CD4-positive, alpha-beta T cell (primary cell): ENCODE measurements at regions of chr4 and their contacts with region 1.

Region 1: GRCh38 chr4:108030332-108030731 is 40.6 kb downstream of the HADH start:
- DNase-seq: peak; percentile 52 to 88 (median 70)
- ATAC-seq: peak; percentile 87
- H3K4me3 ChIP-seq: no peak overlapping the region
- H3K4me3 Mint-ChIP-seq: peak overlapping the region; percentile 64
- H3K27ac ChIP-seq: peak overlapping the region in 1 of 2 donors; percentile 42
- H3K27ac Mint-ChIP-seq: peak overlapping the region; percentile 81
- H3K4me1 ChIP-seq: peaks cover 37% of the 10 kb centered on the region
- H3K4me1 Mint-ChIP-seq: peaks cover 67% of the 10 kb centered on the region
- H3K27me3 ChIP-seq: no peaks in the 10 kb centered on the region
- H3K27me3 Mint-ChIP-seq: no peaks in the 10 kb centered on the region
- CTCF ChIP-seq: peak; percentile 69

Region 2: DNA sequence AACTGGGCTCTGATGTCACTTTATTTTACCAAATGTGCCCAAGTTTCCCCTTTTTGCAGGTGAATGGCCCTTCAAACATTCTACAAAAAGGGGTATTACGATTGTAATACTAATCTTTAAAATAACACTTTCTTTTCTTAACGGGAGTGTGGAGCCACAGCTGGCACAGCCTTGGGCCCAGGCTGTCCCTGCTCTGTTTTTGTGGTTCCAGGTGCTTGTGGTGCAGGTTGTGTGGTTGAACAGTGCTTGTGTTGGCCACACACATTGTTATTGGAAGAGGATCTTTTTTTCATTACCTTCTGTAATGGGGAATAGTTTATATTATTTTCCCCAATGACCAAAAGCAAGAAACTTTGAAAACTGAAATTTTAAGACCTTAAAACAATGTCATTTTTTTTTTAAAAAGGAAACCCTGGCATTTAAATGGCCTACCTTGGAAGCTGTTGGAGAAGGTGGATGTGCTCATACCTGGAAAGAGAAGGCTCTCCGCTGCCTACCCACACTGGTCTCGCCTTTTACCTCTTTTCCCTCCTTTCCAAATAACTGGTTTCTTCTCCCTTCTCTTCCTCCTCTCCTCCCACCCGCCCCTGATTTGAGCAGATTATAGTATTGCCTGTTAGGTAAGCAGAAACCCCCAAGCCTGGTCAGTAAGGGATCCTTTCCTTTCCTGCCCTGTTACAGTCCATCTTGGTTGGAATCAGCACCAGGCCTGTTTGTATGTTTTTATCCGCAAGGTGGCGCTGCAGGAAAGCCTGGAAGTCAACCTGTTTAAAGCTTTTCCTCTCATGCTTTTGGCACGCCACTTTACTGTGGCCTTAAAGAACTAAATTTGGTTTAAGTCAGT is 12.1 kb before region 1 on chr4:
- CTCF ChIA-PET with region 1: interaction called, 44 read pairs
- POLR2A ChIA-PET with region 1: interaction called, 16 read pairs
- intact Hi-C with region 1: no loop called
- DNase-seq: peak; percentile 74 to 92 (median 84)
- ATAC-seq: peak; percentile 89
- H3K4me3 ChIP-seq: no peak overlapping the region
- H3K4me3 Mint-ChIP-seq: no peak overlapping the region
- H3K27ac ChIP-seq: no peak overlapping the region
- H3K27ac Mint-ChIP-seq: no peak overlapping the region
- H3K4me1 ChIP-seq: no peaks in the 10 kb centered on the region
- H3K4me1 Mint-ChIP-seq: peaks cover 15% of the 10 kb centered on the region
- H3K27me3 ChIP-seq: no peaks in the 10 kb centered on the region
- H3K27me3 Mint-ChIP-seq: no peaks in the 10 kb centered on the region
- CTCF ChIP-seq: peak; percentile 85

Region 3: GRCh38 chr4:108060164-108060563 is 29.8 kb after region 1 on chr4:
- CTCF ChIA-PET with region 1: interaction called, 26 read pairs
- POLR2A ChIA-PET with region 1: interaction called, 21 read pairs
- intact Hi-C with region 1: no loop called
- DNase-seq: peak in 3 of 14 experiments; percentile 42 to 48 (median 48)
- ATAC-seq: no peak
- H3K4me3 ChIP-seq: no peak overlapping the region
- H3K4me3 Mint-ChIP-seq: no peak overlapping the region
- H3K27ac ChIP-seq: peak overlapping the region in 1 of 2 donors; percentile 38
- H3K27ac Mint-ChIP-seq: peak overlapping the region; percentile 93
- H3K4me1 ChIP-seq: peaks cover 52% of the 10 kb centered on the region
- H3K4me1 Mint-ChIP-seq: peaks cover 94% of the 10 kb centered on the region
- H3K27me3 ChIP-seq: no peaks in the 10 kb centered on the region
- H3K27me3 Mint-ChIP-seq: no peaks in the 10 kb centered on the region
- CTCF ChIP-seq: peak; percentile 12

Region 4: GRCh38 chr4:108100827-108101226 is 70.5 kb after region 1 on chr4:
- CTCF ChIA-PET with region 1: interaction called, 10 read pairs
- POLR2A ChIA-PET with region 1: interaction called, 16 read pairs
- intact Hi-C with region 1: no loop called
- DNase-seq: peak in 1 of 14 experiments; percentile 22
- ATAC-seq: peak; percentile 58
- H3K4me3 ChIP-seq: no peak overlapping the region
- H3K4me3 Mint-ChIP-seq: peak overlapping the region; percentile 69
- H3K27ac ChIP-seq: peak overlapping the region; percentile 5 to 54
- H3K27ac Mint-ChIP-seq: peak overlapping the region; percentile 92
- H3K4me1 ChIP-seq: peaks cover 34% of the 10 kb centered on the region
- H3K4me1 Mint-ChIP-seq: peaks cover 93% of the 10 kb centered on the region
- H3K27me3 ChIP-seq: no peaks in the 10 kb centered on the region
- H3K27me3 Mint-ChIP-seq: no peaks in the 10 kb centered on the region
- CTCF ChIP-seq: no peak

Region 5: GRCh38 chr4:108155373-108155772 is 125.0 kb after region 1 on chr4:
- CTCF ChIA-PET with region 1: interaction called, 8 read pairs
- POLR2A ChIA-PET with region 1: interaction called, 15 read pairs
- intact Hi-C with region 1: no loop called
- DNase-seq: peak in 6 of 14 experiments; percentile 40 to 79 (median 56)
- ATAC-seq: peak; percentile 62
- H3K4me3 ChIP-seq: peak overlapping the region; percentile 24
- H3K4me3 Mint-ChIP-seq: peak overlapping the region; percentile 87
- H3K27ac ChIP-seq: peak overlapping the region; percentile 10 to 61
- H3K27ac Mint-ChIP-seq: peak overlapping the region; percentile 79
- H3K4me1 ChIP-seq: peaks cover 37% of the 10 kb centered on the region
- H3K4me1 Mint-ChIP-seq: peaks cover 89% of the 10 kb centered on the region
- H3K27me3 ChIP-seq: no peaks in the 10 kb centered on the region
- H3K27me3 Mint-ChIP-seq: no peaks in the 10 kb centered on the region
- CTCF ChIP-seq: peak; percentile 44

Region 6: GRCh38 chr4:108345862-108346817 is 315.8 kb after region 1 on chr4:
- CTCF ChIA-PET with region 1: interaction called, 3 read pairs
- POLR2A ChIA-PET with region 1: no interaction called
- intact Hi-C with region 1: loop called in 1 of 2 experiments (anchors 10 kb)
- DNase-seq: peak in 1 of 14 experiments; percentile 44
- ATAC-seq: peak; percentile 63
- H3K4me3 ChIP-seq: no peak overlapping the region
- H3K4me3 Mint-ChIP-seq: no peak overlapping the region
- H3K27ac ChIP-seq: no peak overlapping the region
- H3K27ac Mint-ChIP-seq: no peak overlapping the region
- H3K4me1 ChIP-seq: peaks cover 24% of the 10 kb centered on the region
- H3K4me1 Mint-ChIP-seq: peaks cover 50% of the 10 kb centered on the region
- H3K27me3 ChIP-seq: no peaks in the 10 kb centered on the region
- H3K27me3 Mint-ChIP-seq: no peaks in the 10 kb centered on the region
- CTCF ChIP-seq: no peak